Activated naive CD4-positive, alpha-beta T cell treated with anti-CD3 and anti-CD28 coated beads for 36 hours (primary cell): ENCODE measurements at regions of chr11 and their contacts with region 1.

Region 1: GRCh38 chr11:118592616-118593367 is 14.6 kb upstream of the PHLDB1 start:
- DNase-seq: no peak
- H3K4me3 Mint-ChIP-seq: no peak overlapping the region
- H3K27ac Mint-ChIP-seq: no peak overlapping the region
- H3K4me1 Mint-ChIP-seq: peaks cover 15% of the 10 kb centered on the region
- H3K27me3 Mint-ChIP-seq: no peaks in the 10 kb centered on the region

Region 2: DNA sequence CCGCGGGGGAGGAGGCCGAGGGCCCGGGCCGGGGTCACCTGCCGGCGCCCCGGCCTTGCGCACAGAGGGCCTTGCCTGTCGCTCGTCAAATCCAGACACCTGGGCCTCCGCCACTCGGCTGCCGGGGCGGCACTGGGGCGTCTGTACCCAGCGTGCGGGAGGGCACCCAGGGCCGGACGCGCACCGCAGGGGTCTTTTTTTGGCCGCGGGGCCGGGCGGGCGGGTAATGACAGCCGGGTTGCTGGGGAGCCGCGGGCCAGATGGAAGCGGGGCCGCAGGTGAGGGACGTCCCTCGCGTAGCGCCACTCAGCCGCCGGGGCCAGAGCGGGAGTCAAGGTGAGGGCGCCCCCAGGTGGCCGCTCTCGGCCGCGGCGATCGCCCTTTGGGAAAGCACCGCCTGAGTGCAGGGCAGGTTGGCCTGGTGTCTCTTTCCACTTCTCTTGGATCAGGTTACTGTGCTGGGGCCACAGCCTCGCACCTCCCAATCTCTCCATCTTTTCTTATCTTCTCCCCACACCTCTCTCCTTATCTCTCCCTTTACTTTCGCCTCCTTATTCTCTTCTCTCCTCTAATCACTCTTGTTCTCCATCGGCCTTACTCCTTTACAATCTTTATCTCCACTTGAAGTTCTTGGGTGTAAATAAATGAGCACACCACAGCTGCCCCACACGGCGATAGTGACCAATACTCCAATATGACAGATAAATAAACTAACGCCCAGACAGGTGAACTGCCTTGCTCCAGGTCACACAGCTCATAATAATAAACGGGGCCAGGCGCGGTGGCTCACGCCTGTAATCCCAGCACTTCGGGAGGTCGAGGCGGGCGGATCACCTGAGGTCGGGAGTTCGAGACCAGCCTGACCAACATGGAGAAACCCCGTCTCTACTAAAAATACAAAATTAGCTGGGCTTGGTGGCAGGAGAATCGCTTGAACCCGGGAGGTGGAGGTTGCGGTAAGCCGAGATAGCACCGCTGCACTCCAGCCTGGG is 18.3 kb after region 1 on chr11:
- CTCF ChIA-PET with region 1: interaction called, 106 read pairs
- intact Hi-C with region 1: loop called (anchors 1 kb)
- DNase-seq: peak; percentile 90
- H3K4me3 Mint-ChIP-seq: peak overlapping the region; percentile 51
- H3K27ac Mint-ChIP-seq: no peak overlapping the region
- H3K4me1 Mint-ChIP-seq: peaks cover 20% of the 10 kb centered on the region
- H3K27me3 Mint-ChIP-seq: peaks cover 17% of the 10 kb centered on the region

Region 3: GRCh38 chr11:118659314-118659952 is 66.6 kb after region 1 on chr11:
- CTCF ChIA-PET with region 1: interaction called, 14 read pairs
- intact Hi-C with region 1: loop called (anchors 1 kb)
- DNase-seq: peak; percentile 96
- H3K4me3 Mint-ChIP-seq: no peak overlapping the region
- H3K27ac Mint-ChIP-seq: no peak overlapping the region
- H3K4me1 Mint-ChIP-seq: peaks cover 5% of the 10 kb centered on the region
- H3K27me3 Mint-ChIP-seq: no peaks in the 10 kb centered on the region